ENCODE measurements at regions of chr22 and their contacts with region 1.

Region 1: GRCh38 chr22:27880778-27881394 is 38.2 kb downstream of the PITPNB start:
- DNase-seq: no peak
- ATAC-seq: peak; percentile 81
- H3K4me3 ChIP-seq: no peak overlapping the region
- H3K27ac ChIP-seq: no peak overlapping the region
- H3K4me1 ChIP-seq: peaks cover 27% of the 10 kb centered on the region
- H3K27me3 ChIP-seq: no peaks in the 10 kb centered on the region
- CTCF ChIP-seq: peak; percentile 61 to 77 (median 65)
- EP300 ChIP-seq: no peak
- POLR2A ChIP-seq: no peak
- RAD21 ChIP-seq: peak; percentile 76

Region 2: DNA sequence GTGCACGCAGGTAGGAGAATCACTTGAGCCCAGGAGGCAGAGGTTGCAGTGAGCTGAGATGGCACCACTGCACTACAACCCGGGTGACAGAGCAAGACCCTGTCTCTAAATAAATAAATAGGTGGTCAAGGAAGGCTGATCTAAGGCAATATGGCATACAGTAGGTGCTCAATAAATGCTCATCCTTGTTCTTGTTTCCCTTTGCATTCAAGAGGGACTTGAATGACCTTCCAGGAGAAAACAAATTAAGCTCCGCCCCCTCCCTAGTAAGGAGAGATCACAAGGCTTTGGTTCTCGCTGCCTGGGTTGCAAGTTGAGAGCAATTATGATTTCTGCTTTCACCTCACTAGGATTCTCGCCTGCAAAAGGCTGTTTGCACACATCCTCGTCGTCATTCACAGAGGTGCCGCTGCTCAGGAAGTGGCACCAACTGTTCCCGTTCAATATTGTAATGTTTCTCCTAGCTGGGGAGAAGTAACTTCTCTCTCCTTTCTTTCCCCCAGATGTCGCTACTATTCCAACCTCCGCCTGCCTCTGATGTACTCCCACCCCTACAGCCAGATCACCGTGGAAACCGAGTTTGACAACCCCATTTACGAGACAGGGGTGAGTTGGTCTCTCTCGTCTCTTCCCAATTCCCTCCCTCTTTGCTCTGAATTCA is 1503.6 kb before region 1 on chr22:
- CTCF ChIA-PET with region 1: no interaction called
- POLR2A ChIA-PET with region 1: no interaction called
- RAD21 ChIA-PET with region 1: no interaction called
- SMC1A ChIA-PET with region 1: no interaction called
- in situ Hi-C with region 1: no loop called
- intact Hi-C with region 1: no loop called
- DNase-seq: no peak
- ATAC-seq: no peak
- H3K4me3 ChIP-seq: no peak overlapping the region
- H3K27ac ChIP-seq: no peak overlapping the region
- H3K4me1 ChIP-seq: no peaks in the 10 kb centered on the region
- H3K27me3 ChIP-seq: peaks cover 3 to 9% of the 10 kb centered on the region in 2 experiments
- CTCF ChIP-seq: no peak; a peak in 1 of 6 replicates
- EP300 ChIP-seq: no peak
- POLR2A ChIP-seq: no peak
- RAD21 ChIP-seq: no peak

Region 3: GRCh38 chr22:27866132-27867086 is 14.5 kb before region 1 on chr22:
- CTCF ChIA-PET with region 1: interaction called, 26 read pairs
- POLR2A ChIA-PET with region 1: no interaction called
- RAD21 ChIA-PET with region 1: no interaction called
- SMC1A ChIA-PET with region 1: interaction called, 6 read pairs
- in situ Hi-C with region 1: no loop called
- intact Hi-C with region 1: no loop called
- DNase-seq: no peak
- ATAC-seq: no peak
- H3K4me3 ChIP-seq: no peak overlapping the region
- H3K27ac ChIP-seq: no peak overlapping the region
- H3K4me1 ChIP-seq: peaks cover 10% of the 10 kb centered on the region; the same call in 1 of the 2 replicates
- H3K27me3 ChIP-seq: no peaks in the 10 kb centered on the region
- CTCF ChIP-seq: no peak
- EP300 ChIP-seq: no peak
- POLR2A ChIP-seq: no peak
- RAD21 ChIP-seq: no peak

Region 4: DNA sequence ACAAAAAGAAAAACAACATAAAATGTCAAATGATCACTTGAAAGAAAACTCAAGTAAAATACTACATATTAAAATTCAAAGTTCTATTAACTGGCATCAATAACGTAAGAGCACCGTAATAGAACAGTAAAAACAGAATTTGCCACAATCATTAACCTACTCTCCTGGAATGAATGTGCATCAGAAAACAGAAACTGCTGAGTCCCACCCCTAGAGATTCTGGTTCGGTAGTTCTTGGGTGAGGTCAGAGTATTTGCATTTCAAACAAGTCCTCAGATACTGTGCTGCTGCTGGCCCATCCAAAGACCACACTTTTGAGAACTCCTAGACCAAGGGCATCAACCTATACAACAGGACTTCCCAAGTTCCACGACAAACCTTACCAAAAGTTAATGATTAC is 14.7 kb after region 1 on chr22:
- CTCF ChIA-PET with region 1: interaction called, 27 read pairs
- POLR2A ChIA-PET with region 1: interaction called, 4 read pairs
- RAD21 ChIA-PET with region 1: interaction called, 5 read pairs
- SMC1A ChIA-PET with region 1: interaction called, 65 read pairs
- in situ Hi-C with region 1: no loop called
- intact Hi-C with region 1: no loop called
- DNase-seq: peak; percentile 76
- ATAC-seq: peak; percentile 98
- H3K4me3 ChIP-seq: no peak overlapping the region; the same call in 1 of the 2 replicates
- H3K27ac ChIP-seq: peak overlapping the region; percentile 75
- H3K4me1 ChIP-seq: peaks cover 19% of the 10 kb centered on the region
- H3K27me3 ChIP-seq: no peaks in the 10 kb centered on the region
- CTCF ChIP-seq: no peak
- EP300 ChIP-seq: peak; percentile 75 to 79; a peak in 2 of 4 replicates
- POLR2A ChIP-seq: no peak
- RAD21 ChIP-seq: no peak

Region 5: GRCh38 chr22:27919222-27919941 is 38.5 kb after region 1 on chr22 and contains the start of gene PITPNB:
- CTCF ChIA-PET with region 1: interaction called, 87 read pairs
- POLR2A ChIA-PET with region 1: no interaction called
- RAD21 ChIA-PET with region 1: interaction called, 6 read pairs
- SMC1A ChIA-PET with region 1: interaction called, 24 read pairs
- in situ Hi-C with region 1: no loop called
- intact Hi-C with region 1: loop called (anchors 2 kb)
- DNase-seq: peak; percentile 90
- ATAC-seq: peak; percentile 87
- H3K4me3 ChIP-seq: peak within 1 kb of the TSS; percentile 85
- H3K27ac ChIP-seq: peak within 1 kb of the TSS; percentile 96
- H3K4me1 ChIP-seq: no peaks in the 10 kb centered on the region
- H3K27me3 ChIP-seq: no peaks in the 10 kb centered on the region
- CTCF ChIP-seq: no peak
- EP300 ChIP-seq: 0 out of 4 replicates have a peak, but pooled peaks of 1 of the 2 experiments have one; percentile 18
- POLR2A ChIP-seq: peak; percentile 80
- RAD21 ChIP-seq: no peak
- polyA plus RNA-seq, gene PITPNB: 43.5 to 52.8 TPM

Region 6: GRCh38 chr22:27952091-27952490 is 71.2 kb after region 1 on chr22:
- CTCF ChIA-PET with region 1: no interaction called
- POLR2A ChIA-PET with region 1: no interaction called
- RAD21 ChIA-PET with region 1: no interaction called
- SMC1A ChIA-PET with region 1: no interaction called
- in situ Hi-C with region 1: no loop called
- intact Hi-C with region 1: no loop called
- DNase-seq: no peak
- ATAC-seq: no peak
- H3K4me3 ChIP-seq: no peak overlapping the region
- H3K27ac ChIP-seq: no peak overlapping the region
- H3K4me1 ChIP-seq: no peaks in the 10 kb centered on the region
- H3K27me3 ChIP-seq: no peaks in the 10 kb centered on the region
- CTCF ChIP-seq: no peak
- EP300 ChIP-seq: no peak
- POLR2A ChIP-seq: no peak
- RAD21 ChIP-seq: no peak

Region 7: GRCh38 chr22:28009272-28009827 is 128.5 kb after region 1 on chr22:
- CTCF ChIA-PET with region 1: interaction called, 33 read pairs
- POLR2A ChIA-PET with region 1: no interaction called
- RAD21 ChIA-PET with region 1: interaction called, 5 read pairs
- SMC1A ChIA-PET with region 1: interaction called, 22 read pairs
- in situ Hi-C with region 1: loop called (anchors 5 kb)
- intact Hi-C with region 1: loop called (anchors 1 kb)
- DNase-seq: peak; percentile 9
- ATAC-seq: peak; percentile 97
- H3K4me3 ChIP-seq: no peak overlapping the region
- H3K27ac ChIP-seq: no peak overlapping the region
- H3K4me1 ChIP-seq: no peaks in the 10 kb centered on the region
- H3K27me3 ChIP-seq: no peaks in the 10 kb centered on the region
- CTCF ChIP-seq: peak; percentile 93 to 98 (median 95)
- EP300 ChIP-seq: no peak
- POLR2A ChIP-seq: no peak
- RAD21 ChIP-seq: peak; percentile 90

Measured in GM12878 (cell line).